Adrenal gland (tissue), 19 donors: ENCODE measurements at regions of chr7 and their contacts with region 1.

Region 1: DNA sequence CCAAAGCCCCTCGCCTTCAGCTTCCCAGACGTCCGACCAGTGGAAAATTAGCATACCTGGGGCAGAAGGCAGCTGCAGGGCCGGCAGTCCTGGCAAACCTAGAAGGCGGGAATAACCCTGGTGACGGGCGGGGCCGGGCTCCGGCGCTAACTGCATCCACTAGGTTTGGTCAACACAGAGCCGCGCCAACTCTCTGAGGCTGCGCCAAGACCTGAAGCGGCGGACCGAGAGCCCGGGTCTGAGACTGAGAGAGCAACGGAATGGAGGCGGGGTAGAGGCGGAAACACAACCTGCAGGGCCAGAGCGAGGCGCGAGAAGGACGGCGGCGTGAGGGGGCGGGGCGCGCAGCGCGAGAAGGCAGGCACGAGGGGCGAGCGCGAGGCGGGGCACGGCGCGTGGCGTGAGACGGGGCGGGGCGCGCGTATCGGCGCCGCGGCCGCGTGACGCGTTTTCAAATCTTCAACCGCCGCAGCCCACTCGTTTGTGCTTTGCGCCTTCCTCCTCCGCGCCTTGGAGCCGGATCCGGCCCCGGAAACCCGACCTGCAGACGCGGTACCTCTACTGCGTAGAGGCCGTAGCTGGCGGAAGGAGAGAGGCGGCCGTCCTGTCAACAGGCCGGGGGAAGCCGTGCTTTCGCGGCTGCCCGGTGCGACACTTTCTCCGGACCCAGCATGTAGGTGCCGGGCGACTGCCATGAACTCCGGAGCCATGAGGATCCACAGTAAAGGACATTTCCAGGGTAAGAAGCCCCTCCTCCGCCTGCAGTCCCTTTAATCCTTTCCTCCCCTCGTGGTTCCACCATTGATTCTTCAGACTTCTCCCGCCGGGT is at the starts of genes DBF4 and SLC25A40:
- DNase-seq: peak; percentile 94 to 97 (median 96)
- H3K4me3 ChIP-seq: peak within 1 kb of the TSS; percentile 68 to 96 (median 82)
- H3K27ac ChIP-seq: peak within 1 kb of the TSS; percentile 87 to 98 (median 95)
- H3K4me1 ChIP-seq: peaks cover 0 to 32% of the 10 kb centered on the region in 2 donors
- H3K27me3 ChIP-seq: no peaks in the 10 kb centered on the region
- CTCF ChIP-seq: no peak
- POLR2A ChIP-seq: peak; percentile 39 to 86
- total RNA-seq, gene DBF4: 0.91 to 23.2 (median 7.5) TPM
- total RNA-seq, gene SLC25A40: 9.9 to 57.2 (median 25.8) TPM

Region 2: DNA sequence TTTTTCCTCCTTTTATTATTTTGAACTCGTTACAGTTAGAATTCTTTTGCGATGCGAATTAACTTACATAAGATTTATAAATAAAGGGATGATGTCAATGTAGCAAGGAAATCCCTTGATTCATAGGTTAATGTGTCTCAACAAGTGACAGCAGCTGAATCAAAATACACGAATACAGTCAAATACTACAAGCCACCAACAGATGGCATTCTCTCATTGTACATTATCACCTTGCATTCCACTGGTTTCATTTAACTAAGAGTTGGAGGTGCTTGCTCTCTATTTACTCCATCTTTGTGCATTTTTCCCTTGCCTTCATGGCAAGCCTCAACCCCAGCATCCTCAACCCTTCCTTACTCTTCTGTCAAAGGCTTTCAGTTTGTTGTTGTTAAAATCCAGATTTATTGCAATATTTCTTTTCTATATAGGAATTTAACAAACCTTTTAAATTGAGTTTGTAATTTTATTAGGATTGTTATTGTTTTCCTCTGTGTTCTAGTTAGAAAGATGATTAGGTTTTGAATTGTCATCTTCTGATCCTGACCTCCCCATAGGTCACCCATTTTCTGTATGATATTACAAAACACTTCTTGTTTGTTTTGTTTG is 78.4 kb before region 1 on chr7:
- intact Hi-C with region 1: loop called in 1 of 2 experiments (anchors 5 kb)
- DNase-seq: no peak
- H3K4me3 ChIP-seq: no peak overlapping the region
- H3K27ac ChIP-seq: no peak overlapping the region
- H3K4me1 ChIP-seq: no peaks in the 10 kb centered on the region
- H3K27me3 ChIP-seq: no peaks in the 10 kb centered on the region
- CTCF ChIP-seq: peak; percentile 39 to 69 (median 62)
- POLR2A ChIP-seq: no peak